HepG2 (cell line): ENCODE measurements at regions of chr3 and their contacts with region 1.

Region 1: GRCh38 chr3:8324740-8325139 is 176.9 kb upstream of the LMCD1 start:
- DNase-seq: peak; percentile 27
- ATAC-seq: peak; percentile 100
- H3K4me3 ChIP-seq: no peak overlapping the region
- H3K27ac ChIP-seq: no peak overlapping the region
- H3K4me1 ChIP-seq: no peaks in the 10 kb centered on the region
- H3K27me3 ChIP-seq: no peaks in the 10 kb centered on the region
- CTCF ChIP-seq: peak; percentile 83
- EP300 ChIP-seq: no peak
- POLR2A ChIP-seq: no peak
- RAD21 ChIP-seq: peak; percentile 59; the same call in 1 of the 2 replicates

Region 2: GRCh38 chr3:8416965-8417364 is 92.2 kb after region 1 on chr3:
- CTCF ChIA-PET with region 1: interaction called, 32 read pairs
- POLR2A ChIA-PET with region 1: no interaction called
- in situ Hi-C with region 1: loop called (anchors 5 kb)
- intact Hi-C with region 1: loop called (anchors 1 kb)
- DNase-seq: no peak
- ATAC-seq: peak; percentile 73
- H3K4me3 ChIP-seq: no peak overlapping the region
- H3K27ac ChIP-seq: no peak overlapping the region
- H3K4me1 ChIP-seq: no peaks in the 10 kb centered on the region
- H3K27me3 ChIP-seq: no peaks in the 10 kb centered on the region
- CTCF ChIP-seq: no peak
- EP300 ChIP-seq: no peak
- POLR2A ChIP-seq: no peak
- RAD21 ChIP-seq: no peak

Region 3: GRCh38 chr3:8607234-8608040 is 282.7 kb after region 1 on chr3:
- CTCF ChIA-PET with region 1: no interaction called
- POLR2A ChIA-PET with region 1: no interaction called
- in situ Hi-C with region 1: loop called (anchors 10 kb)
- intact Hi-C with region 1: no loop called
- DNase-seq: peak; percentile 55
- ATAC-seq: peak; percentile 93
- H3K4me3 ChIP-seq: no peak overlapping the region
- H3K27ac ChIP-seq: no peak overlapping the region
- H3K4me1 ChIP-seq: peaks cover 5% of the 10 kb centered on the region; the same call in 1 of the 2 replicates
- H3K27me3 ChIP-seq: no peaks in the 10 kb centered on the region
- CTCF ChIP-seq: peak; percentile 83
- EP300 ChIP-seq: no peak
- POLR2A ChIP-seq: no peak
- RAD21 ChIP-seq: peak; percentile 82

Region 4: GRCh38 chr3:8622873-8623691 is 298.3 kb after region 1 on chr3:
- CTCF ChIA-PET with region 1: interaction called, 3 read pairs
- POLR2A ChIA-PET with region 1: no interaction called
- in situ Hi-C with region 1: no loop called
- intact Hi-C with region 1: loop called (anchors 5 kb)
- DNase-seq: peak; percentile 41
- ATAC-seq: peak; percentile 92
- H3K4me3 ChIP-seq: no peak overlapping the region
- H3K27ac ChIP-seq: no peak overlapping the region
- H3K4me1 ChIP-seq: 0 out of 2 replicates have a peak, but pooled peaks cover 4% of the 10 kb centered on the region
- H3K27me3 ChIP-seq: no peaks in the 10 kb centered on the region
- CTCF ChIP-seq: peak; percentile 94
- EP300 ChIP-seq: no peak
- POLR2A ChIP-seq: no peak
- RAD21 ChIP-seq: peak; percentile 93